CD4-positive, alpha-beta T cell (primary cell): ENCODE measurements at regions of chr7 and their contacts with region 1.

Region 1: DNA sequence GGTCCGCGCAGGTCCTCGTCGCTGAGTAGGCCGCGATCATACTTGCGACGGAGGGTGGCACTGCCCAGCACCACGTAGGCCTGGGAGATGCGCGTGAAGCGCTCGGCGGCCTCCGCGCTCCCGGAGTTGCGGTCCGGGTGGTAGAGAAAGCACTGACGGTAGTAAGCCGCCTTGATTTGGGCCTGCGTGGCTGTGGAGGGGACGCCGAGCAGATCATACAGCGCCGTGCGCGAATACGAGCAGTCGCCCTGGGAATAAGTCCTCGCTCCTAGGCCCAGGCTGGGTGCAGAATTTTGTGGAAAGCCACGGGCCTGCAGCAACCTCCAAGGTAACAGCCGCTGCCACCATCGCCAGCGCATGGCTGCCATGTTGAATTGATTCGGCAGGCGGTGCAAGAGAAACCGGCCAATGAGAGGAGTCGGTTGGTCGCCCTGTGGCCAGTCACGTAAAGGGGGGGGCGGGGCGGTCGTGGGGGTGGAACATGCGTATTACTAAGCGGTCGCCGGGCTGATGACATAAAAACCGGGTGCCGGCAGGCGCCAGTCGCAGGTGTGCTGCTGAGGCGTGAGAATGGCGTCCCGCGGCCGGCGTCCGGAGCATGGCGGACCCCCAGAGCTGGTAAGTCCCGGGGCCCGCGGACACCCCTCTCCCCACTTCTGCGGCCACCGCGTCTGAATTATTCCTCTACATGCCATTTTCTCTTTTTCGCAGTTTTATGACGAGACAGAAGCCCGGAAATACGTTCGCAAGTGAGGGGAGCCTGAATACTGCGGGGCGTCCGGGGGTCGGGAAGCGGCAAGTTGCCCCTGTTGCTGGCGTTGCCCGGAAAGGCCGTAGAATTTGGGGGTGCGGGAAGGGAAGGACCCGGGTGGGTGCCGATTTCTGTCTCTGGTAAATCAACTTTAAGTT is at the starts of genes BUD23 and DNAJC30:
- DNase-seq: peak; percentile 93 to 98 (median 96)
- ATAC-seq: peak; percentile 96
- H3K4me3 ChIP-seq: peak within 1 kb of the TSS; percentile 71
- H3K4me3 Mint-ChIP-seq: peak within 1 kb of the TSS; percentile 91
- H3K27ac ChIP-seq: peak within 1 kb of the TSS; percentile 69 to 86
- H3K27ac Mint-ChIP-seq: peak within 1 kb of the TSS; percentile 92
- H3K4me1 ChIP-seq: peaks cover 39% of the 10 kb centered on the region
- H3K4me1 Mint-ChIP-seq: peaks cover 35% of the 10 kb centered on the region
- H3K27me3 ChIP-seq: no peaks in the 10 kb centered on the region
- H3K27me3 Mint-ChIP-seq: no peaks in the 10 kb centered on the region
- CTCF ChIP-seq: no peak
- total RNA-seq, gene BUD23: 96.1 to 103 TPM
- total RNA-seq, gene DNAJC30: 14.0 to 14.4 TPM

Region 2: DNA sequence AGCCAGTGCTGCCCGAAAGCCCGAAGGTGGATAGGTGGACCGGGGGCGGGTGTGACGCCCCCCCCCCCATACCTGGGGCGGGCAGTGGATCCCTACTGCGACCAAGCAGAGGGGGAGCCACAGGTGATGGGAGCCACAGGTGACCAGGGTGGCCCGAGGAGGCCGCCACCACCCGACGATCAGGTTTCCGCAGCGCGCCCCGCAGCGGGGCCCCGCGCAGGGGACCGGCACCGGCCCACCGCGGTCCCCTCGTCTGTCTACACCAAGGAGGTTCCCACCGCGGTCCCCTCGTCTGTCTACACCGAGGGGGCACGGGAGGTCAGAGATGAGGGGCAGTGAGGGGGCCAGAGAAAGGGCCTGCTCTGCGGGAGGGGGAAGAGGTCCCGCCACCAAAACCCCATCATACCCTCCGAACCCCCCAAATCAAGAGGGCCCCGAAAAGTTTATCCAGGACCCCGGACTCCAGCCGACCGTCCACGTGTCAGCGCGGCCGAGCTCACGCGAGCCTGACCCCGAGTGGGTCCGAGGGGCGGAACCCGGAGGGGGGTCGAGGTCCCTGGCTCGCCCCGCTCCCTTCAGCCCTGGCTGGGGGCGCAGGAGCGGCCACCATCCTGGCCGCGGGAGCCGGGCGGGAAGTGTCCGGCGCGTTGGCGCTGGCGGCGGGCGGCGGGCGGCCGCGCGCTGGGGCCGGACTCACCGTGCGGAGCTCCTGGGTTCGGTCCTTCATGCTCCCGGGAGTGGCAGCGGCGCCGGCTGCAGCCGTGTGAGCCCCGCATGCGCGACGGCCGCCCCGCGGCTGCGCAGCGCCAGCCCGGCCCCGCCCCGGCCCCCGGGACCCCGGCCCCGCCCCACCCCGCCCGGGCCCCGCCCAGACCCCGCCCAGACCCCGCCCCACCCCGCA is 35.8 kb after region 1 on chr7 and contains the start of gene STX1A:
- CTCF ChIA-PET with region 1: no interaction called
- POLR2A ChIA-PET with region 1: interaction called, 3 read pairs
- intact Hi-C with region 1: loop called (anchors 1 to 2 kb)
- DNase-seq: peak; percentile 40 to 89 (median 65)
- ATAC-seq: peak; percentile 80
- H3K4me3 ChIP-seq: peak within 1 kb of the TSS; percentile 75
- H3K4me3 Mint-ChIP-seq: peak within 1 kb of the TSS; percentile 95
- H3K27ac ChIP-seq: no peak within 1 kb of the TSS
- H3K27ac Mint-ChIP-seq: peak within 1 kb of the TSS; percentile 49
- H3K4me1 ChIP-seq: peaks cover 44% of the 10 kb centered on the region
- H3K4me1 Mint-ChIP-seq: peaks cover 16% of the 10 kb centered on the region
- H3K27me3 ChIP-seq: no peaks in the 10 kb centered on the region
- H3K27me3 Mint-ChIP-seq: peaks cover 4% of the 10 kb centered on the region
- CTCF ChIP-seq: no peak
- total RNA-seq, gene STX1A: 15.5 to 20.7 TPM